ENCODE measurements at regions of chr11 and their contacts with region 1.

Region 1: DNA sequence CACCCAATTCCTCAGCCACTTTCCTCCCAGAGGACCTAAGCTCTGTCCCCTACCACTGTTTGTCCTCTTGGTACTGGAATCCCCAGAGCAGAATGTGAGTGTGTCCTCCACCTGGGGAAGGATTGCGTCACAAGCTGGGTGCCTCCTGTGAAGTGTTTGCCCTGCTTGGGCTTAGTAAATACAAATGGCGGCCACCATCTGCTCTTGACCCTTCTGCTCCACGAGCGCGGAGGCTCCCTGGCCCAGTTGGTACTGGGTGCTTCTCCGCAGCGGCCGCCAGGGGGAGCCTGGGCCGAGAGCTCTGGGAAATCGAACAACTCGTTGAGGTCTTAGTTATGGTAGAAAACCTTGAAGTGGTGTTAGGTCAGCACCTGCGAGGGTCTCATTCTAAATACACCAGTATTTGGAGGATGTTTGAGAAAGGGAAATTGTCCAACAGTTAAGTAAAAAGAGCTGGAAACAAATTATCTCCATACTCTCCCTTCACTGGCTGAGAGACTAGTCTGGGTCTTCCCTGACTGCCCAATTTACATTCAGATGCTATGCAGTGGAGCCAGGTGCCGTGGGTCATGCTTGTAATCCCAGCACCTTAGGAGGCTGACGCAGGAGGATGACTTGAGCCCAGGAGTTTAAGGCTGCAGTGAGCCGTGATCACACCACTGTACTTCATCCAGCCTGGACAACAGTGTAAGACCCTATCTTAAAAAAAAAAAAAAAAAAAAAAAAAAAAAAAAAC is 74.6 kb upstream of the TEAD1 start:
- DNase-seq: no peak
- H3K4me3 Mint-ChIP-seq: no peak overlapping the region
- H3K27ac Mint-ChIP-seq: no peak overlapping the region
- H3K4me1 Mint-ChIP-seq: peaks cover 12% of the 10 kb centered on the region
- H3K27me3 Mint-ChIP-seq: no peaks in the 10 kb centered on the region
- CTCF ChIP-seq: peak; percentile 51

Region 2: GRCh38 chr11:12508151-12508751 is 91.3 kb before region 1 on chr11:
- CTCF ChIA-PET with region 1: no interaction called
- POLR2A ChIA-PET with region 1: no interaction called
- intact Hi-C with region 1: no loop called
- DNase-seq: no peak
- H3K4me3 Mint-ChIP-seq: no peak overlapping the region
- H3K27ac Mint-ChIP-seq: no peak overlapping the region
- H3K4me1 Mint-ChIP-seq: no peaks in the 10 kb centered on the region
- H3K27me3 Mint-ChIP-seq: no peaks in the 10 kb centered on the region
- CTCF ChIP-seq: no peak

Region 3: DNA sequence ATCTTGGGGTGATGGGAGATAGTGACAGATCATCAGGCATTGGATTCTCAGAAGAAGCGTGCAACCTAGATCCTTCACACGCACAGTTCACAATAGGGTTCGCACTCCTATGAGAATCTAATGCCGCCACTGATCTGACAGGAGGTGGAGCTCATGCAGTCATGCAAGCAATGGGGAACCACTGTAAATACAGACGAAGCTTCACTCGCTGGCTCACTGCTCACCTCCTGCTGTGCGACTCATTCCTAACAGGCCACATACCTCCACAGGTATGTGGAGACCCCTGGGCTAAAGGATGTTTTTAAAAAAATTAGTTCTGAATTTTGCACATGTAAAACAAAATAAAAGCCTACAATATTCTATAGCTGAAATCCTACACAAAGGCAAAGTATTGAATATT is 54.1 kb after region 1 on chr11:
- CTCF ChIA-PET with region 1: no interaction called
- POLR2A ChIA-PET with region 1: no interaction called
- intact Hi-C with region 1: no loop called
- DNase-seq: peak; percentile 25
- H3K4me3 Mint-ChIP-seq: no peak overlapping the region
- H3K27ac Mint-ChIP-seq: no peak overlapping the region
- H3K4me1 Mint-ChIP-seq: no peaks in the 10 kb centered on the region
- H3K27me3 Mint-ChIP-seq: no peaks in the 10 kb centered on the region
- CTCF ChIP-seq: no peak

Region 4: DNA sequence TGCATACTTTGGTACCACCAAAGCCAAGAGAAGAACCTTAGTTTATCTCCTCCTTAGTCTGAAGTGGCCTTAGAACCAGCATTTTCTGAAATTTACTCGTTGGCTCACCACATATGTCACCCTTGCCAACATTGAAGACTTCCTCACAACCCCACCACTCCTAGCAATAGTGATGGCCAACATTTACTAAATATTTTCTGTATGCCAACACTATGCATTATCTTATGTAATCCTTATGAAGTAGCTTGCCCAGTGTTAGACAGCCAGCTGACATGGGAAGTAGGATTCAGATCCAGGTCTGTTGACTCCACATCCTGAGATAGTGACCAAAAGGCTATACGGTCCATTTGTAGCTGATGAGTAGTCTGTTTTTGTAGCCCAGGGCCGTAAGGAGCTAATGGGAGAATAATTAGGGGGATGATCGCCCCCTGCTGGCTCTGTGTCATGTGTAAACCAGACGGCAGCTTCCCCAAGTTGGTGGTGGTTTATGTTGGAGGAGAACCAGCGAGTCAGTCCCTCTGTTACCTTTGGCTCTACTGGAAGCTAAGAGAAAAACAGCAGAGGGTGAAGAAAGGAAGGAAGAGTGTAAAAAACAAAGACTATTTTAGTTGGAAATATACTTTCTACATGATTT is 289.1 kb after region 1 on chr11:
- CTCF ChIA-PET with region 1: no interaction called
- POLR2A ChIA-PET with region 1: no interaction called
- intact Hi-C with region 1: loop called (anchors 2 kb)
- DNase-seq: peak; percentile 85
- H3K4me3 Mint-ChIP-seq: no peak overlapping the region
- H3K27ac Mint-ChIP-seq: peak overlapping the region; percentile 84
- H3K4me1 Mint-ChIP-seq: peaks cover 17% of the 10 kb centered on the region
- H3K27me3 Mint-ChIP-seq: no peaks in the 10 kb centered on the region
- CTCF ChIP-seq: peak; percentile 55

Measured in MCF 10A (cell line).